ENCODE measurements at regions of chr3 and their contacts with region 1.

Region 1: GRCh38 chr3:177633671-177634207 is 436.5 kb upstream of the TBL1XR1 start:
- DNase-seq: no peak
- H3K4me3 ChIP-seq: no peak overlapping the region
- H3K27ac ChIP-seq: no peak overlapping the region
- H3K4me1 ChIP-seq: no peaks in the 10 kb centered on the region
- H3K27me3 ChIP-seq: no peaks in the 10 kb centered on the region
- CTCF ChIP-seq: no peak

Region 2: DNA sequence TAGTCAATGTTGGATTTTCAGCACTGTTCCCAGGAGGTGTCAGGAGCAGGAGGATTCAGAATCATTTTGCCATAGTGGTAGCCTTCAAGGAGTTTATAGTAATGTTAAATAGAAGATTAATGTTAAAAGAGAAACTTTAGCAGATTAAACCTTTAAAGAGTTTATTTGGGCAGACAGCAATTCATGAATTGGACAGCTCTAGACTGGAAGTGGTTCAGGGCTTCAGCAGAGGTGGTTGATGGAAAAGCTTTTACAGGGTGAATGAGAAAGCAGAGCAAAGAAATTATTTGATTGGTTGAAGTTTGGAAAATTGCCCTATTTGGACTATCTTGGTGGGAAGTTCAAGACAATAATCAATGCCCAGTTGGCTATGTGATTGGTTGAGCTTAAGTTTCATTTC is 19.8 kb before region 1 on chr3:
- intact Hi-C with region 1: loop called (anchors 1 kb)
- DNase-seq: no peak
- H3K4me3 ChIP-seq: no peak overlapping the region
- H3K27ac ChIP-seq: no peak overlapping the region
- H3K4me1 ChIP-seq: peaks cover 0 to 10% of the 10 kb centered on the region in 2 donors
- H3K27me3 ChIP-seq: no peaks in the 10 kb centered on the region
- CTCF ChIP-seq: no peak

Region 3: GRCh38 chr3:177917234-177917861 is 283.6 kb after region 1 on chr3:
- intact Hi-C with region 1: no loop called
- DNase-seq: no peak
- H3K4me3 ChIP-seq: no peak overlapping the region
- H3K27ac ChIP-seq: no peak overlapping the region
- H3K4me1 ChIP-seq: no peaks in the 10 kb centered on the region
- H3K27me3 ChIP-seq: no peaks in the 10 kb centered on the region
- CTCF ChIP-seq: no peak